ENCODE measurements at regions of chr3 and their contacts with region 1.

Region 1: DNA sequence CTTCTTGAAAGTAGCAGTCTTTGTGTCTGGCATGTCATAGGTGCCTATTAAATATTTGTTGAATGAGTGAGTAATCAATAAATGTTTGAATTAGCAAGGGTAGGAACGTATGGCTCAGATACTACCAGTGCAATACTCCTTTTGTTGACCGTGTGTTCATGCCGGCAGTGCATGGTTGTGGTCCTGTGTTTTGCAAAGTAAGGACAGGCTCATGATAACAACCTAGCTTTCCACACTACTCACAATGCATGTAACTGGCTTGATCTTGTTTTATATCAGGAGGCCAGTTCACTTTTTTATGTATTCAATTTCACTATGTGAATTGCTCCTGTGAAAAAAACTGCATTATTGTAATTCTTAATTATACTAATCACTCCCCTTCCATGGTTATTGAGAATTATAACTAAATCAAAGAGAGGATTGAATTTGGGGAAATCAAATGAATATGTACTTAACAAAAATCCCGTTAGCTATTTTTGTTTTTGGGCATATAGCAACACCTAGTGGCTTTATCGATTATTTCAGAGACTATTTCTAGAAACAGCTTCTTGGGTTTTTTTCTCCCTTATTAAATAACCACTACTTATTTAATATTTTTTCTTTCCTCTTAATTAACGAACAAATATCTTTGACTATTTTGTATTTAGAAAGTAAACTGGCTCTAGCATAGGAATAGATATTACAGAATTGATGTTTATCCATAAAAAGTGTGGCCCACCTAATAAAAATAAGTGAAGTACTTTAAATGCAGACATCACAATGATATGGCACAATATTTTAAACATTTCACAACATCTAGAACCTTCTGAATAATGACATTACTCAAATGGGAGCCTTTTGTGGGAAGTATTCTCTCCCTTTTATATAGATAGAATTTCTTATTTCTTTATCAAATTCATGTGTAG is 218.5 kb downstream of the BBX start:
- DNase-seq: no peak
- ATAC-seq: peak; percentile 41
- H3K4me3 ChIP-seq: no peak overlapping the region
- H3K27ac ChIP-seq: no peak overlapping the region
- H3K4me1 ChIP-seq: no peaks in the 10 kb centered on the region
- H3K27me3 ChIP-seq: no peaks in the 10 kb centered on the region

Region 2: GRCh38 chr3:107574650-107575049 is 166.6 kb before region 1 on chr3:
- intact Hi-C with region 1: loop called (anchors 5 to 10 kb)
- DNase-seq: no peak
- ATAC-seq: no peak
- H3K4me3 ChIP-seq: no peak overlapping the region
- H3K27ac ChIP-seq: no peak overlapping the region
- H3K4me1 ChIP-seq: no peaks in the 10 kb centered on the region
- H3K27me3 ChIP-seq: no peaks in the 10 kb centered on the region

Region 3: DNA sequence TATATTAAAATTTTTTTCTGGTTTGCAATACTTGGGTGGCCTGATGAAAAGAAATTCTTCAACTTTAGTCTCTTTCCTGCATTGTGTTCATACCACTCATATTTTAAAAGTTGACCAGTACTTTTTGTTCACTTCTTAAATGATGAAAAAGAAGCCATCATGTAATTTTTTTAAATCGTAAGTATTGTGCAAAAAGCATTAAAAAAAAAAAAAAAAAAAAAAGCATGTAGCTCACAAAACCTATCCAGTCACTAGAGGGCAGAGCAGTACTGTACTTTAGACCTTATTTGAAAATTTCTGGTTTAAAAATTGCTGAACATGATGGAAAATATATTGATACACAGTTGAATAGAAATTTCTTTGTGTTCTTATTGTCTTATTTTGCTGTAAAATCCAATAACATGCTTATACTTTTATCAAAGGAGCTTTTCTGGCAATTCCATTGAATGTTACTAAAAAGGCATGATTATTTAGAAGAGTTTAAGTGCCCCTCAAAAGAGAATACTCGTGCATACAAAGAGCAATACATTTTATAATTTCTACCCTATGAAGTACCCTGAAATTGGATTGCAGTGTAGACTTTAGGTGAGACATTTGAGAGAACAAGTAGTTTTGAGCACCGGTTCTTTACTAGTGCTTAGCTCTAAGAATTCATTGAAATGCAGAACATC is 80.8 kb before region 1 on chr3:
- intact Hi-C with region 1: loop called (anchors 5 kb)
- DNase-seq: no peak
- ATAC-seq: peak; percentile 73
- H3K4me3 ChIP-seq: no peak overlapping the region
- H3K27ac ChIP-seq: no peak overlapping the region
- H3K4me1 ChIP-seq: peaks cover 0 to 7% of the 10 kb centered on the region in 2 donors
- H3K27me3 ChIP-seq: no peaks in the 10 kb centered on the region

Region 4: GRCh38 chr3:107904536-107905066 is 163.4 kb after region 1 on chr3:
- intact Hi-C with region 1: no loop called
- DNase-seq: no peak
- ATAC-seq: no peak
- H3K4me3 ChIP-seq: no peak overlapping the region
- H3K27ac ChIP-seq: peak overlapping the region in 1 of 2 donors; percentile 21
- H3K4me1 ChIP-seq: peaks cover 0 to 3% of the 10 kb centered on the region in 2 donors
- H3K27me3 ChIP-seq: no peaks in the 10 kb centered on the region

Region 5: DNA sequence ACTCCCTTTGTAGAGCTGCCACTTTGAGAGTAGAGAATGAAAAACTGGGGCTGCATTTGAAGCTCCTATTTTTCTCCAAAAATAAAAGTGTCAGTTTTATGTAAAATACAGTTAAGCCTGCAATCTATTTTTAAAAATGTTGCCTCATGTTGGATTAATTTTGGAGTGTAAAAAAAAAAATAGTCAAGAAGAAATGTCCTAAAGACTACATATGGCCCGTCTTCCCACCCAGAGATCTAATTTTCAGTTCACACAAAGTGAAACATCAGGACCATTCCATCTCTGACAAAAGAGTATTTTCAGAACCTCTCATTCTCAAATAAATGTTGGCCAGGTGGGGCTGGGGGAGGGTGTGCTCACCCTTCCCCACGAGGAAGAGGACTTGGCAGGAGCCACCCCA is 617.8 kb after region 1 on chr3:
- intact Hi-C with region 1: no loop called
- DNase-seq: no peak
- ATAC-seq: no peak
- H3K4me3 ChIP-seq: no peak overlapping the region
- H3K27ac ChIP-seq: no peak overlapping the region
- H3K4me1 ChIP-seq: no peaks in the 10 kb centered on the region
- H3K27me3 ChIP-seq: no peaks in the 10 kb centered on the region

Measured in aorta (tissue), 5 donors.